Activated CD8-positive, alpha-beta T cell treated with anti-CD3 and anti-CD28 coated beads, Interleukin-2, amount 10 ng/mL, durations not matched to agents 7 days and 5 days (primary cell): ENCODE measurements at regions of chr22 and their contacts with region 1.

Region 1: GRCh38 chr22:37077884-37078485 is 26.4 kb downstream of the KCTD17 start:
- DNase-seq: peak; percentile 89
- ATAC-seq: peak; percentile 20
- H3K4me3 Mint-ChIP-seq: peak overlapping the region; percentile 72
- H3K27ac Mint-ChIP-seq: peak overlapping the region; percentile 99
- H3K4me1 Mint-ChIP-seq: peaks cover 69% of the 10 kb centered on the region
- H3K27me3 Mint-ChIP-seq: no peaks in the 10 kb centered on the region

Region 2: DNA sequence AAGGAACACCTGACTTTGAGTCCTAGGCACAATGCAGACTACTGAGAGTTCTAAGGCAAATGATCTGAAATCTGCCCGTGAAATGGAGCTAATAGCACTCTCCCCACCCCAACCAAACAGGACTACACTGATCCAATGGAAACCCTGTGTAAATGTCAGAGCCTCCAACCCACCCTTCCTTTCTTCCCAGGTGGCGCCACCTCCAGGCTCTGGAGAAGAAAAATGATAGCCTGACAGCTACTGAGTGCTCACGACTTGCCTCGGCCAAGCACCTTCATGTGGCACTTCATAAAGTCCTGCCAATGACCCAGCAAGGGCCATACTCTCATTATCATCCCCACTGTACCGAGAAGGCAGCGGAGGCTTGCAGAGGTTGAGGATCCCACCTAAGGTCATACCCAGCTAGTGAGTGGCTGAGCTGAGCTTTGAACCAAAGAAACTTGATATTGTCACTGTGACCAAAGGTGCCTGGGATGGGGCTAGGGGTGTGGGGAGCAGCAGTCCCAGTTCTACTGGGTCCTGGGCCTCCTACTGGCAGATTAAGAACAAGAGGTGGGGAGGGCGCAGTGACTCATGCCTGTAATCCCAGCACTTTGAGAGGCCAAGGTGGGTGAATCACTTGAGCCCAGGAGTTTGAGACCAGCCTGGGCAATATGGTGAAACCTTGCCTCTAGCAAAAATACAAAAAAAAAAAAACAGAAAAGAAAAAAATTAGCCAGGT is 79.2 kb before region 1 on chr22:
- CTCF ChIA-PET with region 1: no interaction called
- POLR2A ChIA-PET with region 1: no interaction called
- DNase-seq: no peak
- ATAC-seq: no peak
- H3K4me3 Mint-ChIP-seq: no peak overlapping the region
- H3K27ac Mint-ChIP-seq: no peak overlapping the region
- H3K4me1 Mint-ChIP-seq: no peaks in the 10 kb centered on the region
- H3K27me3 Mint-ChIP-seq: peaks cover 17% of the 10 kb centered on the region

Region 3: GRCh38 chr22:37051391-37052385 is 26.3 kb before region 1 on chr22 and contains the start of gene KCTD17:
- CTCF ChIA-PET with region 1: interaction called, 10 read pairs
- POLR2A ChIA-PET with region 1: interaction called, 4 read pairs
- DNase-seq: peak; percentile 85
- ATAC-seq: peak; percentile 100
- H3K4me3 Mint-ChIP-seq: peak within 1 kb of the TSS; percentile 76
- H3K27ac Mint-ChIP-seq: peak within 1 kb of the TSS; percentile 63
- H3K4me1 Mint-ChIP-seq: peaks cover 19% of the 10 kb centered on the region
- H3K27me3 Mint-ChIP-seq: no peaks in the 10 kb centered on the region
- total RNA-seq, gene KCTD17: 34.3 to 35.9 TPM

Region 4: GRCh38 chr22:37121887-37122591 is 44.1 kb after region 1 on chr22:
- CTCF ChIA-PET with region 1: interaction called, 135 read pairs
- POLR2A ChIA-PET with region 1: interaction called, 99 read pairs
- DNase-seq: peak; percentile 97
- ATAC-seq: peak; percentile 98
- H3K4me3 Mint-ChIP-seq: peak overlapping the region; percentile 78
- H3K27ac Mint-ChIP-seq: peak overlapping the region; percentile 100
- H3K4me1 Mint-ChIP-seq: peaks cover 90% of the 10 kb centered on the region
- H3K27me3 Mint-ChIP-seq: no peaks in the 10 kb centered on the region

Region 5: GRCh38 chr22:37148742-37149665 is 71.0 kb after region 1 on chr22:
- CTCF ChIA-PET with region 1: interaction called, 23 read pairs
- POLR2A ChIA-PET with region 1: interaction called, 31 read pairs
- DNase-seq: no peak
- ATAC-seq: peak; percentile 8
- H3K4me3 Mint-ChIP-seq: peak overlapping the region; percentile 84
- H3K27ac Mint-ChIP-seq: peak overlapping the region; percentile 99
- H3K4me1 Mint-ChIP-seq: peaks cover 56% of the 10 kb centered on the region
- H3K27me3 Mint-ChIP-seq: no peaks in the 10 kb centered on the region

Region 6: DNA sequence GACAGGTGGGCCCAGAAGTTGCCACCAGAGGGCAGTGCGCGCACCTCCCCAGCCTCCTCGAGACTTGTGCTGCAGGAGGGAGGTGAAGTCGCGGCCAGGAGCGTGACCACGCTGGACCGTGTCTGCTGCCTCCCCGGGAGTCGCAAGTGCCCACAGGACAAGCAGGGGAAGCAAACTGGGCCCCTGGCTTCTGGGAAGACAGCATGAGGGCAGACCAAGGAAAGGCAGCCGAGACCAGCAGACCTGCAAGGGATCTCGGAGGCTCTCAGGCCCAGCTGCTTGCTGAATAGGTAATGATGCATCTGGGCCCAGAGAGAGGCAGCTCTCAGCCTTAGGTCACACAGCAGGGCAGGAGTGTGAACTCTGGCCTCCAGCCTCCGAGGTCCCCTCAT is 88.7 kb after region 1 on chr22:
- CTCF ChIA-PET with region 1: interaction called, 17 read pairs
- POLR2A ChIA-PET with region 1: interaction called, 8 read pairs
- DNase-seq: peak; percentile 92
- ATAC-seq: peak; percentile 48
- H3K4me3 Mint-ChIP-seq: peak overlapping the region; percentile 83
- H3K27ac Mint-ChIP-seq: peak overlapping the region; percentile 96
- H3K4me1 Mint-ChIP-seq: peaks cover 93% of the 10 kb centered on the region
- H3K27me3 Mint-ChIP-seq: no peaks in the 10 kb centered on the region

Region 7: DNA sequence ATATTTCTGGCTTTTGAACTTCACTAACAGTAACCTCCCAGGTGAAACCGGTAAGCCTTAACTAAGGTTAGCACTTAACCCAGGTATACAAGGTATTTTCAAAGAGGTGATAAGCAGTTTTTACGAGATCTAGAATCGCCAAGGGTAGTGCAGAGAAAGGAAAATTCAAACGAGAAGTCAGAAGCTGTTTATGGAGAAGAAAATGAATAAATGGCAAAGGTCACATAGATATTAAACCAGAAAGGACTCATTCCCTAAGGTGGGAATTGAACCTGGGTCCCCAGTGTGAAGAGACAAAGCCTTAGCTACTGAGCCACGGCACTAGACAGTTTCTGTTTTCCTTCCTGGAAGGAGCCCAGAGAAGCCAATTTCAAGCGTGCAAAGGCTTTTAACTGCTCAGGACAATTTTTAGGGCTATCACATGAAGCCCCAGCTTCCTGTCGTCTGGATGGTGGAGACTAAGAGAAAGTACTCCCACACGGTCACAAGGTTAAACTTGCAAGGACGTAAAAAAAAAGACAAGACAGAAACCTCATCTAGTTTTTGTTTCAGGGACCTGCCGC is 115.7 kb after region 1 on chr22:
- CTCF ChIA-PET with region 1: interaction called, 30 read pairs
- POLR2A ChIA-PET with region 1: interaction called, 13 read pairs
- DNase-seq: peak; percentile 70
- ATAC-seq: peak; percentile 29
- H3K4me3 Mint-ChIP-seq: peak overlapping the region; percentile 16
- H3K27ac Mint-ChIP-seq: peak overlapping the region; percentile 86
- H3K4me1 Mint-ChIP-seq: peaks cover 75% of the 10 kb centered on the region
- H3K27me3 Mint-ChIP-seq: no peaks in the 10 kb centered on the region

Region 8: GRCh38 chr22:37260901-37261336 is 182.9 kb after region 1 on chr22:
- CTCF ChIA-PET with region 1: interaction called, 13 read pairs
- POLR2A ChIA-PET with region 1: no interaction called
- DNase-seq: peak; percentile 75
- ATAC-seq: peak; percentile 73
- H3K4me3 Mint-ChIP-seq: no peak overlapping the region
- H3K27ac Mint-ChIP-seq: peak overlapping the region; percentile 50
- H3K4me1 Mint-ChIP-seq: peaks cover 26% of the 10 kb centered on the region
- H3K27me3 Mint-ChIP-seq: peaks cover 4% of the 10 kb centered on the region